ENCODE measurements at regions of chr3 and their contacts with region 1.

Region 1: DNA sequence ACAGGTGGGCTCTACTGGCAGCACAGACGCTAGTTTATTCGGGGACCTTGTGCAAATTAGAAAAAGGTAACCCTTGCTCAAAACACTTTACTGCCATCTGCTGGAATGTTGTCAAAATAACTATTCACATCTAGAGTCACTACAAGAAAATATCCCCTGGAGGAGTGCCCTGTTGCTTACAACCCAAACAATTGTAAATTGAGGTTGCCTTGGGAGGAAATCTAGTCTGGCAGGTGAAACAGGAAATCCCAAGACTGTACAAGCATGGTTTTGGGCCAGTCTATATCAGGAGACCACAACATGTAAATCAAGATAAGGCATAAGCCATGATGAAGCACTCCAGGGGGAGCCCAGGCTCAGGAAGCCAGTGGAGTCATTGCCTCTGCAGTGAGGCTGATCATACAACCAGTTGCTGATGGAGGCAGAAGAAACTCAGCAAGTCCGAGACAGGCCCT is 136.8 kb upstream of the ACP3 start:
- DNase-seq: peak; percentile 58
- H3K4me3 ChIP-seq: no peak overlapping the region
- H3K27ac ChIP-seq: no peak overlapping the region
- H3K4me1 ChIP-seq: no peaks in the 10 kb centered on the region
- CTCF ChIP-seq: peak; percentile 79

Region 2: GRCh38 chr3:132034486-132035464 is 145.6 kb before region 1 on chr3 and contains the start of gene CPNE4:
- CTCF ChIA-PET with region 1: no interaction called
- POLR2A ChIA-PET with region 1: no interaction called
- intact Hi-C with region 1: loop called (anchors 5 kb)
- DNase-seq: peak; percentile 67
- H3K4me3 ChIP-seq: no peak within 1 kb of the TSS
- H3K27ac ChIP-seq: no peak within 1 kb of the TSS
- H3K4me1 ChIP-seq: no peaks in the 10 kb centered on the region
- CTCF ChIP-seq: peak; percentile 82
- total RNA-seq, gene CPNE4: not detected in 2 replicates

Region 3: GRCh38 chr3:132394320-132394719 is 214.0 kb after region 1 on chr3:
- CTCF ChIA-PET with region 1: no interaction called
- POLR2A ChIA-PET with region 1: no interaction called
- intact Hi-C with region 1: no loop called
- DNase-seq: no peak
- H3K4me3 ChIP-seq: no peak overlapping the region
- H3K27ac ChIP-seq: no peak overlapping the region
- H3K4me1 ChIP-seq: no peaks in the 10 kb centered on the region
- CTCF ChIP-seq: no peak

Measured in OCI-LY7 (cell line).